ENCODE measurements at regions of chr2 and their contacts with region 1.

Region 1: GRCh38 chr2:113138428-113139322 is 11.3 kb downstream of the IL1RN start:
- DNase-seq: peak; percentile 72 to 81 (median 79)
- H3K4me3 ChIP-seq: peak overlapping the region in 1 of 2 donors; percentile 14
- H3K4me3 Mint-ChIP-seq: peak overlapping the region; percentile 50 to 79 (median 74)
- H3K27ac ChIP-seq: no peak overlapping the region
- H3K27ac Mint-ChIP-seq: peak overlapping the region; percentile 67 to 85 (median 79)
- H3K4me1 ChIP-seq: peaks cover 12% of the 10 kb centered on the region
- H3K4me1 Mint-ChIP-seq: peaks cover 12 to 24% (median 16%) of the 10 kb centered on the region in 4 donors
- H3K27me3 ChIP-seq: no peaks in the 10 kb centered on the region
- H3K27me3 Mint-ChIP-seq: no peaks in the 10 kb centered on the region

Region 2: GRCh38 chr2:112941753-112942658 is 196.7 kb before region 1 on chr2:
- CTCF ChIA-PET with region 1: no interaction called
- POLR2A ChIA-PET with region 1: no interaction called
- intact Hi-C with region 1: no loop called
- DNase-seq: peak; percentile 28 to 48 (median 41)
- H3K4me3 ChIP-seq: no peak overlapping the region
- H3K4me3 Mint-ChIP-seq: no peak overlapping the region
- H3K27ac ChIP-seq: no peak overlapping the region
- H3K27ac Mint-ChIP-seq: no peak overlapping the region
- H3K4me1 ChIP-seq: no peaks in the 10 kb centered on the region
- H3K4me1 Mint-ChIP-seq: peaks cover 0 to 5% (median 0%) of the 10 kb centered on the region in 4 donors
- H3K27me3 ChIP-seq: no peaks in the 10 kb centered on the region
- H3K27me3 Mint-ChIP-seq: peaks cover 1 to 4% of the 10 kb centered on the region in 2 donors

Region 3: GRCh38 chr2:112985090-112985489 is 153.6 kb before region 1 on chr2:
- CTCF ChIA-PET with region 1: interaction called, 10 read pairs
- POLR2A ChIA-PET with region 1: no interaction called
- intact Hi-C with region 1: no loop called
- DNase-seq: peak in 4 of 5 donors; percentile 9 to 30 (median 18)
- H3K4me3 ChIP-seq: no peak overlapping the region
- H3K4me3 Mint-ChIP-seq: no peak overlapping the region
- H3K27ac ChIP-seq: no peak overlapping the region
- H3K27ac Mint-ChIP-seq: peak overlapping the region in 5 of 7 donors; percentile 4 to 71 (median 26)
- H3K4me1 ChIP-seq: peaks cover 18% of the 10 kb centered on the region
- H3K4me1 Mint-ChIP-seq: peaks cover 15 to 21% (median 19%) of the 10 kb centered on the region in 4 donors
- H3K27me3 ChIP-seq: no peaks in the 10 kb centered on the region
- H3K27me3 Mint-ChIP-seq: no peaks in the 10 kb centered on the region

Region 4: DNA sequence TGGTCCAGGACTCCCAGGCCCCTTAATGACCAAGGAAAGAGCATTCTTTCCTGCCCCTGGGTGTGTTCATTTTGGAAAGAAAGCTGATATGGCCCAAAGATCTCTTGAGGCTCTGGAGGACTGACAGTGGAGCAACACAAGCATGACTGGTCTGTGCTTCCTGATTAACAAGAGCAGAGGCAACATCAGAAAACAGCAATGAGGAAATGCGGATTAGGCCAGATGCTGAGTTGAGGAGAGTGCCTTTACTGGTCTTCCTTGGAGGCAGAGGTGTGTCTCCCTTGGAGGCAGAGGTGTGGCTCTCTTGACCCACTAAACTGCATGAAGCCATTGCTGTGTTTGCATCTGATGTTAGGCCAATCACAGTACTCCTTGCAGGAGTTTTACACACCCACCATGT is 105.9 kb before region 1 on chr2:
- CTCF ChIA-PET with region 1: no interaction called
- POLR2A ChIA-PET with region 1: no interaction called
- intact Hi-C with region 1: no loop called
- DNase-seq: no peak
- H3K4me3 ChIP-seq: no peak overlapping the region
- H3K4me3 Mint-ChIP-seq: no peak overlapping the region
- H3K27ac ChIP-seq: no peak overlapping the region
- H3K27ac Mint-ChIP-seq: peak overlapping the region in 1 of 7 donors; percentile 45
- H3K4me1 ChIP-seq: no peaks in the 10 kb centered on the region
- H3K4me1 Mint-ChIP-seq: no peaks in the 10 kb centered on the region
- H3K27me3 ChIP-seq: no peaks in the 10 kb centered on the region
- H3K27me3 Mint-ChIP-seq: peaks cover 10 to 13% of the 10 kb centered on the region in 2 donors

Region 5: DNA sequence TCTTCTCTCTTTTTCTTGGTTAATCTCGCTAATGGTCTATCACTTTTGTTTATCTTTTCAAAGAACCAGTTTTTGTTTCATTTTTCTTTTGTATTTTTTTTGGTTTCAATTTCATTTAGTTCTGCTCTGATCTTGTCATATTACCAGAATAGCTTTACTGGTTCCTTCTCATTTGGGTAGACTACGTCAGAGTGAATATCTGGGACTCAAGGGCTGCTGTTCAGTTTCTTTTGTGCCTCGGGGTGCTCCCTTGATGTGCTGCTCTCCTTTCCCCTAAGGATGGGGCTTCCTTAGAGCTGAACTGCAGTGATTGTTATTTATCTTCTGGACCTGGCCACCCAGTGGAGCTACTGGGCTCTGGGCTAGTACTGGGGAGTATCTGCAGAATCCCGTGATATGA is 40.6 kb before region 1 on chr2:
- CTCF ChIA-PET with region 1: no interaction called
- POLR2A ChIA-PET with region 1: no interaction called
- intact Hi-C with region 1: no loop called
- DNase-seq: peak in 4 of 5 donors; percentile 14 to 45 (median 28)
- H3K4me3 ChIP-seq: peak overlapping the region in 1 of 2 donors; percentile 1
- H3K4me3 Mint-ChIP-seq: peak overlapping the region; percentile 54 to 83 (median 77)
- H3K27ac ChIP-seq: no peak overlapping the region
- H3K27ac Mint-ChIP-seq: peak overlapping the region; percentile 37 to 91 (median 54)
- H3K4me1 ChIP-seq: peaks cover 12% of the 10 kb centered on the region
- H3K4me1 Mint-ChIP-seq: peaks cover 11 to 13% (median 12%) of the 10 kb centered on the region in 4 donors
- H3K27me3 ChIP-seq: no peaks in the 10 kb centered on the region
- H3K27me3 Mint-ChIP-seq: peaks cover 4 to 9% of the 10 kb centered on the region in 2 donors

Region 6: GRCh38 chr2:113148606-113149560 is 10.2 kb after region 1 on chr2:
- CTCF ChIA-PET with region 1: interaction called, 21 read pairs
- POLR2A ChIA-PET with region 1: no interaction called
- intact Hi-C with region 1: no loop called
- DNase-seq: no peak
- H3K4me3 ChIP-seq: no peak overlapping the region
- H3K4me3 Mint-ChIP-seq: no peak overlapping the region
- H3K27ac ChIP-seq: no peak overlapping the region
- H3K27ac Mint-ChIP-seq: no peak overlapping the region
- H3K4me1 ChIP-seq: no peaks in the 10 kb centered on the region
- H3K4me1 Mint-ChIP-seq: peaks cover 0 to 4% (median 0%) of the 10 kb centered on the region in 4 donors
- H3K27me3 ChIP-seq: no peaks in the 10 kb centered on the region
- H3K27me3 Mint-ChIP-seq: no peaks in the 10 kb centered on the region

Region 7: GRCh38 chr2:113173542-113174395 is 35.1 kb after region 1 on chr2 and contains the start of gene PSD4:
- CTCF ChIA-PET with region 1: interaction called, 150 read pairs
- POLR2A ChIA-PET with region 1: interaction called, 56 read pairs
- intact Hi-C with region 1: loop called (anchors 1 kb)
- DNase-seq: peak; percentile 89 to 94 (median 91)
- H3K4me3 ChIP-seq: peak within 1 kb of the TSS; percentile 81 to 82
- H3K4me3 Mint-ChIP-seq: peak within 1 kb of the TSS; percentile 88 to 99 (median 94)
- H3K27ac ChIP-seq: peak within 1 kb of the TSS; percentile 85
- H3K27ac Mint-ChIP-seq: peak within 1 kb of the TSS; percentile 92 to 100 (median 96)
- H3K4me1 ChIP-seq: peaks cover 80% of the 10 kb centered on the region
- H3K4me1 Mint-ChIP-seq: peaks cover 56 to 89% (median 71%) of the 10 kb centered on the region in 4 donors
- H3K27me3 ChIP-seq: no peaks in the 10 kb centered on the region
- H3K27me3 Mint-ChIP-seq: peaks cover 2% of the 10 kb centered on the region in 2 donors
- total RNA-seq, gene PSD4: 100.0 to 101 TPM

Region 8: DNA sequence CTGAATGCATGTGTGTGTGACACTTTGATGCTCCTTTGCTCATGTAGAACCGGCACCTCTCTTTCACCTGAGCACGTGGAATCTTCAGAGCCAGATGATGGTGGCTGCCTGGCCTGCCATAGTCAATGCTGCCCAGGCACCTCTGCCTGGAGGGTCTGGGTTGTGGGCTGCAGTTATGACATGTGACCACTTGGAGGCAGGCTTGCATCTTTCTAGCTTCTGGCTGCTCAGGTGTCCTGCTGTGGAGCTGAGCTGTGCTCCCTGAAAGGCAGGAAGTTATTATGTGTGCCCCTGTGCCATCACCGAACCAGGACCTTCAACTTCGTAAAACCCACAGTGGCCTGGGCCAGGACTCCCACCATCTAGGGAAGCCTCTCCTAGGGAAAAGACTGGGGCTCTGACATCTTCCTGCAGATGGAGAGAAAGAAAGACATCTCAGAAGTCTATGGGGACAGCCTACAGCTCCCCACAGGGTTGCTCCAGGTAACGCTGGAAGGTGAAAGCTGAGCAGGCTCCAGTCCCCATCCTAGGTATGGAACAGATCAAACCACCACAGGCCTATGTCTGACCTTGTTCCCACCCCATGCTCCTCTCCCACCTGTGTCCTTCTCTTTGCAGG is 65.3 kb after region 1 on chr2:
- CTCF ChIA-PET with region 1: interaction called, 662 read pairs
- POLR2A ChIA-PET with region 1: interaction called, 48 read pairs
- intact Hi-C with region 1: loop called (anchors 1 kb)
- DNase-seq: peak; percentile 73 to 77 (median 75)
- H3K4me3 ChIP-seq: no peak overlapping the region
- H3K4me3 Mint-ChIP-seq: peak overlapping the region in 3 of 8 donors; percentile 27 to 63 (median 49)
- H3K27ac ChIP-seq: peak overlapping the region; percentile 35
- H3K27ac Mint-ChIP-seq: peak overlapping the region; percentile 80 to 91 (median 85)
- H3K4me1 ChIP-seq: peaks cover 12% of the 10 kb centered on the region
- H3K4me1 Mint-ChIP-seq: peaks cover 9 to 32% (median 20%) of the 10 kb centered on the region in 4 donors
- H3K27me3 ChIP-seq: no peaks in the 10 kb centered on the region
- H3K27me3 Mint-ChIP-seq: no peaks in the 10 kb centered on the region

Region 9: DNA sequence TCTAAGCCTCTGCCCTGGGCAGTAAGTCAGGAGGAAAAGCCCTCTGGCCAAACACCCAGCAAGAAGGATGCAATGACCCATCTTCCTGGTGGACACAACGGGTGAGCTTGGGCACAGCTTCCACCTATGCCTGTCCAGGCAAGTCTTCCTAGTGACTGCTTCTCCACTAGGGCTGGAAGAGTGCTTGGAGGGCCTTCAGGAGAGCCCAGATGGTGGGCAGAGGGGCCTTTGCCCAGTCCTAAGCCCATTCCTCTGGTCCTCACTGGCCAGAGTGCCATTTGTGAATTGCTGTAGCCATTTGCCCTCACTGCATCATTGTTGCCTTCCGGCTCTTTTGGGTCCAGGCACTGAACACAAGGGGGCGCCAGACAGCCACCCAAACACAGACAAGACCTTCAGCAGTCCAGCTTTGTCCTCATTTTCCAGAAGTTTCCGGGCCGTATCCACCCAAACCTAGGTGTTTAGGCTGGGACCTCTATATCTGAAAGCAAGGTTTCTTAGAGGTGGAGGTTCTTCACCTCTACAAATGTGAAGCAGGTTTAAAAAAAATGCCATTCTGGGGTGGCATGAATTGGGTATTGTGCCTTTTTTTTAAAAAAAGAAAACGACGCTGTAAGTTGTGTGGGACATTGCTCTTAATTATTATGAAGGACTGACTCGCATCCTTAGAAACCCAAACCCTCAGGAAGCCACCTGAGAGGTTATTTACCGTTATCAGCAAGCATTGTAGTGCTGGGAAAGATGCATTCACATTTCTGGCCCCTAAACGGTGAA is 110.5 kb after region 1 on chr2:
- CTCF ChIA-PET with region 1: interaction called, 59 read pairs
- POLR2A ChIA-PET with region 1: interaction called, 3 read pairs
- intact Hi-C with region 1: loop called (anchors 1 kb)
- DNase-seq: peak; percentile 72 to 79 (median 74)
- H3K4me3 ChIP-seq: no peak overlapping the region
- H3K4me3 Mint-ChIP-seq: peak overlapping the region in 2 of 8 donors; percentile 43 to 45
- H3K27ac ChIP-seq: peak overlapping the region; percentile 6
- H3K27ac Mint-ChIP-seq: peak overlapping the region in 5 of 7 donors; percentile 62 to 80 (median 70)
- H3K4me1 ChIP-seq: peaks cover 53% of the 10 kb centered on the region
- H3K4me1 Mint-ChIP-seq: peaks cover 42 to 57% (median 49%) of the 10 kb centered on the region in 4 donors
- H3K27me3 ChIP-seq: no peaks in the 10 kb centered on the region
- H3K27me3 Mint-ChIP-seq: no peaks in the 10 kb centered on the region

Region 10: DNA sequence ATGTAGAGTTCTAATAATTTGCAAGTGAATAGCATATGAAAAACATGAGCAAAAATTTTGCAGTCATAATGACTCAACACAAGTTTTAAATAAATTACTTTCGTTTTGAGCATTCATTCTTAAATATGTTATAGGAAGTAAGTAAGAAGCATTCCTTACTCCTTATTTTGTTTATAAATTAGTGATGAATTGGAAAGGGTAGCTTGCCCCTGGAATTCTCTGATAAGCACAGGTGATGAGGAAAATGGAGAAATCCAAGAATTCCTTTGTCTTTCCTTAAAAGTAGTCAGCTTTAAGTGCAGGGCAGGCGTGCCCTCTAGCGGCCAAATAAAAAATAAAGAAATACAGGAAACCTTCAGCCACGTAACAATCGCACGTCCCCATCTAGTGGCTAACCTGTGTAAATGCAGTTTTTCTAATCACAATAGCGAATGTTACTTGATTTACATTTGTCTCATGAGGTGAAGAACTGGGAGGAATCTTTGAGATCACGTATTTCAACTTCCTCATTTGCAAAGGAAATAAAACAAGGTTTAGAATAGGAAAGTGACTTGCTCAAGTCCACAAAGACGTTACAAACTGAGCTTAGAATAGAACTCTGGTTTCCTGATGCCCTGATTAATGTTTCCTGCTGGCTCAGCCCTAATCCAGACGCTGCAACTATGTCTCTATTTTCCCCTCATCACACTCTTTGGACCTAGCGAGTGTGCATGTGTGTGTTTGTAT is 251.6 kb after region 1 on chr2:
- CTCF ChIA-PET with region 1: interaction called, 38 read pairs
- POLR2A ChIA-PET with region 1: no interaction called
- intact Hi-C with region 1: loop called (anchors 5 kb)
- DNase-seq: peak; percentile 70 to 84 (median 80)
- H3K4me3 ChIP-seq: peak overlapping the region; percentile 27 to 40
- H3K4me3 Mint-ChIP-seq: peak overlapping the region; percentile 61 to 86 (median 72)
- H3K27ac ChIP-seq: no peak overlapping the region
- H3K27ac Mint-ChIP-seq: peak overlapping the region; percentile 44 to 73 (median 67)
- H3K4me1 ChIP-seq: peaks cover 4% of the 10 kb centered on the region
- H3K4me1 Mint-ChIP-seq: peaks cover 5 to 16% (median 10%) of the 10 kb centered on the region in 4 donors
- H3K27me3 ChIP-seq: no peaks in the 10 kb centered on the region
- H3K27me3 Mint-ChIP-seq: peaks cover 1 to 6% of the 10 kb centered on the region in 2 donors

Measured in CD4-positive, alpha-beta memory T cell (primary cell).